ENCODE measurements at regions of chr10 and their contacts with region 1.

Region 1: GRCh38 chr10:37520488-37520887 is 336.9 kb downstream of the ZNF248 start:
- DNase-seq: no peak
- ATAC-seq: no peak
- H3K4me3 ChIP-seq: no peak overlapping the region
- H3K27ac ChIP-seq: no peak overlapping the region
- H3K4me1 ChIP-seq: no peaks in the 10 kb centered on the region
- H3K27me3 ChIP-seq: no peaks in the 10 kb centered on the region

Region 2: DNA sequence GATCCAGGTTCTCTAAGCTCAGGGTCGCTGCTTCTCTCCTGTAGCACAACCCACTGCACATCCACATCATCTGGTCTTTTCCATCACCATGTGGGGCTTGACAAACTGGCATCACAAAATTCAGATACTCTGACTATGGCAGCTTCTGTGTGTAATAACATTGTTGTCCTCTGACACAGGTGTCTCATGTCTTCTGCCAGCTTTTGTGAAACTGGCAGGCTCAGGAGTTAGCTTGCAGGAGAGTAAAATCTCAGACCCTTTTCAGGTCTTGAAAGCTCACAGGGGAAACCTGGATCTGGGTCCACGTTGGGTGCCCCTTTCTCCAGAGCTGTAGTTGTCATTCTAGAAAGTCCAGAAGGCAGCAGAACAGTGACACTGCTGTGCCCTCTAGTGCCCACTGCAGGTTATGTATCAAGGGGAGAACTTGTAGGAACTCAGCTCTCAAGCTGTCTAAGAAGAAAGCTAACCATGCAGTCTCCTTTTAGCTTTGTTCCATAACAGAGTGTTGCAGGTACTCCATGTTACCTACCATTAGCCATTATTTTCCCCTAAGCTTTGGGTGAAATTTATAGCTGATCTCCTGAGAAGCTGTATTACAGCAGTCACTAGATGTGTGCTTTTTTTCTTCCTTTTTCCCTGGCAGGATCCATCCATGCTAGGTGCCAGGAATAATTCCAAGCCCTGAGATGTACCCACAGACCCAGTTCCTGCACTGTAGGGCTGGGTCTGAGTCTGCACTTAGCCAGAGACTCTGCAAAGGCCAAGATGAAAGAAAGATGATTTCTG is 234.2 kb after region 1 on chr10:
- intact Hi-C with region 1: loop called in 1 of 2 experiments (anchors 5 kb)
- DNase-seq: no peak
- ATAC-seq: no peak
- H3K4me3 ChIP-seq: no peak overlapping the region
- H3K27ac ChIP-seq: no peak overlapping the region
- H3K4me1 ChIP-seq: no peaks in the 10 kb centered on the region
- H3K27me3 ChIP-seq: no peaks in the 10 kb centered on the region

Measured in aorta (tissue), 5 donors.